Endothelial cell of umbilical vein (primary cell): ENCODE measurements at regions of chr3 and their contacts with region 1.

Region 1: DNA sequence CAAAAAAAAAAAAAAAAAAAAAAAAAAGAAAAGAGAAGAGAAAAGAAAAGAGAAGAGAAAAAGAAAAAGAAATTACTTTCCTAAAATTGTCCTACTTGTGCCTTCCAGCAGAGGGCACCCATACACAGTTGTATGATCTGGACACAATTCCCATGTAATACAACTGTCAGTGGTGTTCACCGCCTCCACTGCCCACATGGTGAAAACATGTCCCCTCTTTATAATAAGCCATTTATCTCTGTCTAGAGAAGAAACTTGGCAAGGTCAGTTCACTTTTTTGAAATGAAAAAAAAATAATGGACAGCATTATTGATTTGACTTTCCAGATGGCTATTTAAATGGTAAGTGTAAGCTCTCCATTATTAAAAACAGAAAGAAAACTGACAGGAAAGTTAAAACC is 459.4 kb downstream of the GBE1 start:
- DNase-seq: peak; percentile 71
- H3K4me3 ChIP-seq: no peak overlapping the region
- H3K27ac ChIP-seq: no peak overlapping the region
- H3K4me1 ChIP-seq: no peaks in the 10 kb centered on the region
- H3K27me3 ChIP-seq: no peaks in the 10 kb centered on the region
- CTCF ChIP-seq: peak; percentile 53 to 57
- POLR2A ChIP-seq: no peak

Region 2: GRCh38 chr3:81173514-81173913 is 128.5 kb before region 1 on chr3:
- CTCF ChIA-PET with region 1: no interaction called
- POLR2A ChIA-PET with region 1: no interaction called
- dilution Hi-C with region 1: no loop called
- intact Hi-C with region 1: no loop called
- DNase-seq: peak; percentile 36
- H3K4me3 ChIP-seq: no peak overlapping the region
- H3K27ac ChIP-seq: no peak overlapping the region
- H3K4me1 ChIP-seq: no peaks in the 10 kb centered on the region
- H3K27me3 ChIP-seq: no peaks in the 10 kb centered on the region
- CTCF ChIP-seq: peak in 1 of 2 donors; percentile 29
- POLR2A ChIP-seq: no peak

Region 3: GRCh38 chr3:81320862-81321261 is 18.8 kb after region 1 on chr3:
- CTCF ChIA-PET with region 1: interaction called, 21 read pairs
- POLR2A ChIA-PET with region 1: no interaction called
- dilution Hi-C with region 1: no loop called
- intact Hi-C with region 1: no loop called
- DNase-seq: no peak
- H3K4me3 ChIP-seq: no peak overlapping the region
- H3K27ac ChIP-seq: no peak overlapping the region
- H3K4me1 ChIP-seq: no peaks in the 10 kb centered on the region
- H3K27me3 ChIP-seq: no peaks in the 10 kb centered on the region
- CTCF ChIP-seq: no peak
- POLR2A ChIP-seq: no peak

Region 4: GRCh38 chr3:81352867-81353545 is 51.0 kb after region 1 on chr3:
- CTCF ChIA-PET with region 1: interaction called, 19 read pairs
- POLR2A ChIA-PET with region 1: no interaction called
- dilution Hi-C with region 1: no loop called
- intact Hi-C with region 1: no loop called
- DNase-seq: peak; percentile 85
- H3K4me3 ChIP-seq: no peak overlapping the region
- H3K27ac ChIP-seq: no peak overlapping the region
- H3K4me1 ChIP-seq: no peaks in the 10 kb centered on the region
- H3K27me3 ChIP-seq: no peaks in the 10 kb centered on the region
- CTCF ChIP-seq: peak; percentile 16 to 38
- POLR2A ChIP-seq: no peak

Region 5: GRCh38 chr3:81419228-81419627 is 117.2 kb after region 1 on chr3:
- CTCF ChIA-PET with region 1: interaction called, 23 read pairs
- POLR2A ChIA-PET with region 1: no interaction called
- dilution Hi-C with region 1: no loop called
- intact Hi-C with region 1: loop called (anchors 2 kb)
- DNase-seq: peak; percentile 43
- H3K4me3 ChIP-seq: no peak overlapping the region
- H3K27ac ChIP-seq: no peak overlapping the region
- H3K4me1 ChIP-seq: peaks cover under 1% of the 10 kb centered on the region
- H3K27me3 ChIP-seq: no peaks in the 10 kb centered on the region
- CTCF ChIP-seq: peak; percentile 21 to 32
- POLR2A ChIP-seq: no peak

Region 6: GRCh38 chr3:81476692-81477091 is 174.6 kb after region 1 on chr3:
- CTCF ChIA-PET with region 1: interaction called, 3 read pairs
- POLR2A ChIA-PET with region 1: no interaction called
- dilution Hi-C with region 1: no loop called
- intact Hi-C with region 1: loop called (anchors 5 kb)
- DNase-seq: no peak
- H3K4me3 ChIP-seq: no peak overlapping the region
- H3K27ac ChIP-seq: no peak overlapping the region
- H3K4me1 ChIP-seq: peaks cover 26% of the 10 kb centered on the region
- H3K27me3 ChIP-seq: no peaks in the 10 kb centered on the region
- CTCF ChIP-seq: no peak
- POLR2A ChIP-seq: no peak

Region 7: DNA sequence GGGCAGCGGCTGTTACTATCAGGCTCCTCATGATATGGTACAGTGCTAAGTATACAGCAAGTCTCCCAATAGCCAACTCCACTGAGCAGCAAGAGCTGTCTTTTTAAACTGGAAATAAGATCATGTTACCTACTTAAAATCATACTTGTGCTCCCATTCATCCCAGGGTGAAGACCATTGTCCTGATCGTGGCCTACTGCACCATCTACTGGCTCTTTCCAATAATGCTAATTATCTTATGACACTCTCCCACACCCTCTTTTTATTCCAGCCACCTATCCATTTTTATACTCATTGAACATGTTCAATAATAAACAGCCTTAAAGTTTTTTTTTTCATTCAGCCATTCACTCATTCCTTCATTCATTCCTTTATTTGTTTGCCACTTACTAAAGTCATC is 341.7 kb after region 1 on chr3:
- CTCF ChIA-PET with region 1: interaction called, 60 read pairs
- POLR2A ChIA-PET with region 1: no interaction called
- dilution Hi-C with region 1: no loop called
- intact Hi-C with region 1: loop called (anchors 1 kb)
- DNase-seq: peak; percentile 41
- H3K4me3 ChIP-seq: no peak overlapping the region
- H3K27ac ChIP-seq: no peak overlapping the region
- H3K4me1 ChIP-seq: no peaks in the 10 kb centered on the region
- H3K27me3 ChIP-seq: no peaks in the 10 kb centered on the region
- CTCF ChIP-seq: peak; percentile 28 to 42
- POLR2A ChIP-seq: no peak